Naive thymus-derived CD4-positive, alpha-beta T cell (primary cell): ENCODE measurements at regions of chr3 and their contacts with region 1.

Region 1: DNA sequence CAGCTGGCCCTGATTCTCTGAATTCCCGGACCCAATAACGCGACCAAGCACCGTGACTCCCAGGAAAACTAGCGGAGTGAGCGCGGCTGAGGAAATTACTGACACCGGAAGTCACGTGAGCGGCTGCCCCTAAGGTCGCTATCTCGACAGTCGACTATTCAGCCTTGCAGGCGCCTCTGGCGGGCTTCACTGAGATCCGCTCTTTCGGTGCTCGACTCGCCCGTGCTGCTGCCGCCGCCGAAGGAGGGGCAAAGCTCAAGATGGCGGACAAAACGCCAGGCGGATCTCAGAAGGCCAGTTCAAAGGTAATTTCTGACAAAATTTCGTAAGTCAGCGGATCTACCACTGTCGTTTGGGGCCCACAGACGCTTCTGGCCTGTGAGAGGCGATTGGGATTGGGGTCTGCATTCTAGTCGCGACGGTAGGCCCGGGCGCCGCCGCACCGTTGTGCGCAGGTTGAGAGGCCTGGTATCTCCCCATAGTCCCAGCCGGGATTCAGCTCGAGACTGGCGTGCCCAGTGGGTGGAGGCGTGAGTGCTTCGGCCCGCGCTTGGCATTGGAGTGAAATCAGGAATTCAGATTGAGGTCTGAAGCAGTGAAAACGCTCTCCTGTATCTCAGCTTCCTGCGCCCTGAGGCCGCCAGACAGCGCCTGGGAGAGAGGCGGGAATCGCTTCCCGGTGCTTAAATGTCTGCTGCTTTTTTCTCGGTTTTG is at the start of gene U2SURP:
- DNase-seq: peak; percentile 77 to 95 (median 88)
- ATAC-seq: peak; percentile 99
- H3K4me3 ChIP-seq: peak within 1 kb of the TSS; percentile 96
- H3K4me3 Mint-ChIP-seq: peak within 1 kb of the TSS; percentile 91 to 100 (median 98)
- H3K27ac ChIP-seq: peak within 1 kb of the TSS; percentile 95
- H3K27ac Mint-ChIP-seq: peak within 1 kb of the TSS; percentile 96 to 100 (median 99)
- H3K4me1 ChIP-seq: peaks cover 13 to 20% of the 10 kb centered on the region in 2 donors
- H3K4me1 Mint-ChIP-seq: peaks cover 34 to 63% (median 53%) of the 10 kb centered on the region in 7 donors
- H3K27me3 ChIP-seq: no peaks in the 10 kb centered on the region
- H3K27me3 Mint-ChIP-seq: peaks cover 0 to 5% (median 2%) of the 10 kb centered on the region in 5 donors
- total RNA-seq, gene U2SURP: 132 to 172 (median 158) TPM

Region 2: GRCh38 chr3:142148792-142149672 is 852.5 kb before region 1 on chr3 and contains the start of gene TFDP2:
- CTCF ChIA-PET with region 1: no interaction called
- POLR2A ChIA-PET with region 1: no interaction called
- intact Hi-C with region 1: loop called (anchors 1 to 5 kb)
- DNase-seq: peak; percentile 77 to 88 (median 86)
- ATAC-seq: peak; percentile 99
- H3K4me3 ChIP-seq: peak within 1 kb of the TSS; percentile 81
- H3K4me3 Mint-ChIP-seq: peak within 1 kb of the TSS; percentile 85 to 96 (median 92)
- H3K27ac ChIP-seq: peak within 1 kb of the TSS; percentile 78
- H3K27ac Mint-ChIP-seq: peak within 1 kb of the TSS; percentile 57 to 95 (median 87)
- H3K4me1 ChIP-seq: peaks cover 0 to 13% of the 10 kb centered on the region in 2 donors
- H3K4me1 Mint-ChIP-seq: peaks cover 24 to 41% (median 32%) of the 10 kb centered on the region in 7 donors
- H3K27me3 ChIP-seq: no peaks in the 10 kb centered on the region
- H3K27me3 Mint-ChIP-seq: peaks cover 0 to 16% (median 0%) of the 10 kb centered on the region in 5 donors
- total RNA-seq, gene TFDP2: 23.7 to 44.7 (median 41.0) TPM

Region 3: GRCh38 chr3:142509079-142509478 is 492.4 kb before region 1 on chr3:
- CTCF ChIA-PET with region 1: no interaction called
- POLR2A ChIA-PET with region 1: no interaction called
- intact Hi-C with region 1: loop called in 1 of 2 experiments (anchors 5 kb)
- DNase-seq: peak in 3 of 9 donors; percentile 3 to 8 (median 5)
- ATAC-seq: peak; percentile 37
- H3K4me3 ChIP-seq: peak overlapping the region; percentile 48
- H3K4me3 Mint-ChIP-seq: peak overlapping the region; percentile 71 to 88 (median 84)
- H3K27ac ChIP-seq: peak overlapping the region; percentile 51
- H3K27ac Mint-ChIP-seq: peak overlapping the region; percentile 74 to 96 (median 89)
- H3K4me1 ChIP-seq: peaks cover 0 to 10% of the 10 kb centered on the region in 2 donors
- H3K4me1 Mint-ChIP-seq: peaks cover 3 to 23% (median 14%) of the 10 kb centered on the region in 7 donors
- H3K27me3 ChIP-seq: no peaks in the 10 kb centered on the region
- H3K27me3 Mint-ChIP-seq: no peaks in the 10 kb centered on the region

Region 4: GRCh38 chr3:142723968-142724681 is 277.4 kb before region 1 on chr3 and contains the start of gene TRPC1:
- CTCF ChIA-PET with region 1: no interaction called
- POLR2A ChIA-PET with region 1: no interaction called
- intact Hi-C with region 1: loop called (anchors 1 to 2 kb)
- DNase-seq: peak in 8 of 9 donors; percentile 58 to 83 (median 78)
- ATAC-seq: peak; percentile 97
- H3K4me3 ChIP-seq: peak within 1 kb of the TSS; percentile 76
- H3K4me3 Mint-ChIP-seq: peak within 1 kb of the TSS; percentile 80 to 92 (median 88)
- H3K27ac ChIP-seq: peak within 1 kb of the TSS; percentile 76
- H3K27ac Mint-ChIP-seq: peak within 1 kb of the TSS; percentile 31 to 94 (median 88)
- H3K4me1 ChIP-seq: peaks cover 0 to 4% of the 10 kb centered on the region in 2 donors
- H3K4me1 Mint-ChIP-seq: peaks cover 5 to 20% (median 11%) of the 10 kb centered on the region in 7 donors
- H3K27me3 ChIP-seq: peaks cover 0 to 2% of the 10 kb centered on the region in 2 donors
- H3K27me3 Mint-ChIP-seq: peaks cover 20 to 67% (median 22%) of the 10 kb centered on the region in 5 donors
- total RNA-seq, gene TRPC1: 1.5 to 7.6 (median 5.3) TPM

Region 5: GRCh38 chr3:143031327-143031726 is 29.8 kb after region 1 on chr3:
- CTCF ChIA-PET with region 1: no interaction called
- POLR2A ChIA-PET with region 1: no interaction called
- intact Hi-C with region 1: no loop called
- DNase-seq: no peak
- ATAC-seq: no peak
- H3K4me3 ChIP-seq: no peak overlapping the region
- H3K4me3 Mint-ChIP-seq: no peak overlapping the region
- H3K27ac ChIP-seq: no peak overlapping the region
- H3K27ac Mint-ChIP-seq: no peak overlapping the region
- H3K4me1 ChIP-seq: no peaks in the 10 kb centered on the region
- H3K4me1 Mint-ChIP-seq: peaks cover 0 to 9% (median 4%) of the 10 kb centered on the region in 7 donors
- H3K27me3 ChIP-seq: no peaks in the 10 kb centered on the region
- H3K27me3 Mint-ChIP-seq: no peaks in the 10 kb centered on the region

Region 6: DNA sequence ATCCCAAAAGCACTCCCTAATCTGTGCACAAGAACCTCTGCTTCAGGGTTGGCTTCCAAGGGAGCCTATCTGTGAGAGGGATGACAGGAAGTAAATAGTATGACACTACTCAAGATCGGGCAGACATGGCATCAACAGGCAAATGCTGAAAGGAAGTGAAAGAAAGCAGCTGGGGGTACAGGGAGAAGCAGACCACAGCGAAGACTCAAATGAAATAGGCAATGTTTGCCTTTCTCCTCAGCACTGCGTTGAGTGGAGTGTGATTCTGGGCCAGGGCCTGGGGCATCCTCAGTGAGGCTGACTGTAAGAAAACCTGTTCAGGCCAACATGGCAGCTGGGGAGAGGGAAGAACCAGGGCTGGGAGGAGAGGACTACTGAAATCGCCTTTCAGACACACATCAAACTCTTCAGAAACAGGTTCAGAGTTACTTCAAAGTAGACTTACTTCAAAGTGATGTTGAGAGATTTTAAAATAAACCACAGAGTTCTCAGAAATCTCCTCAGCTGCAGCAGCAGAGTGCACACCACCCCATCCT is 750.2 kb after region 1 on chr3:
- CTCF ChIA-PET with region 1: interaction called, 4 read pairs
- POLR2A ChIA-PET with region 1: interaction called, 6 read pairs
- intact Hi-C with region 1: loop called in 1 of 2 experiments (anchors 5 kb)
- DNase-seq: peak; percentile 12 to 83 (median 75)
- ATAC-seq: peak; percentile 80
- H3K4me3 ChIP-seq: peak overlapping the region; percentile 42
- H3K4me3 Mint-ChIP-seq: peak overlapping the region; percentile 67 to 89 (median 78)
- H3K27ac ChIP-seq: peak overlapping the region; percentile 63
- H3K27ac Mint-ChIP-seq: peak overlapping the region; percentile 88 to 100 (median 94)
- H3K4me1 ChIP-seq: peaks cover 16 to 35% of the 10 kb centered on the region in 2 donors
- H3K4me1 Mint-ChIP-seq: peaks cover 20 to 71% (median 68%) of the 10 kb centered on the region in 7 donors
- H3K27me3 ChIP-seq: no peaks in the 10 kb centered on the region
- H3K27me3 Mint-ChIP-seq: no peaks in the 10 kb centered on the region